ENCODE measurements at regions of chr2 and their contacts with region 1.

Region 1: DNA sequence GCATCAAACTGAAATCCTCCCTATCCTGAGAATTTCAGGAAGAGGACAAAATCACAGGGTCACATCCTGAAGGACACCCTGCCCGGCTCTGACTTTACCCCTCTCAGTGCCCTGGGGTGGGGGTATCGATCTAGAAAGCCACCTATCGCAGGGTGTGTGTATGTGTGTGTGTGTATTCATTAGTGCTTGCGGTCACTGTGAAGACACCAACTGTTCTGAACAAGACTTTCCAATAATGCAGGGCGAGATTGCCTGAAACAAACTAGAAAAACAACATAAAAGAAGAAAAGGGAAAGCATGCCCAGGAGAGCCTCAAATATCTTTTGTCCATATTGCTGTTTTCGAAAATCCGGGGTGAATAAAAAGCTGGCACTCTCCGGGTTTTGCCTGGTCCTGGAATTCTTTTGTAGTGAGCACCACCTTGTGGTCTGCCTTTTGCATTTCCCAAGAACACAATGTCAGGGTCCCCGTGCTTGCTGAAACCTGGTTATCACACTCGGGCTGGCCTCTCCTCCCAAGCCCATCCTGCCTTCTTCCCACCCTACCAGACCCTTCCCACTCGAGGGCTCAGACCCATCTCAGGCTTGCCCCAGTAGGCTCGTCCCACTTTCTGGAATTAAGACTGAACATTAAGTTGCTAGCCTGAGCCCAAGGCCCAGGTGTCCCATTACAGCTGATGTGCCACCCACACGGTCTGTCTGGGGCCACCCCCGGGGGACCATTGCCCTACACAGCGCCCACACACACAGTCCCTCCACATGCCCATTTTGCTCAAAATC is 25.0 kb upstream of the COPS8 start:
- DNase-seq: peak; percentile 62
- ATAC-seq: peak; percentile 90
- H3K4me3 ChIP-seq: no peak overlapping the region
- H3K27ac ChIP-seq: no peak overlapping the region
- H3K4me1 ChIP-seq: peaks cover 7% of the 10 kb centered on the region; the same call in 1 of the 2 replicates
- H3K27me3 ChIP-seq: no peaks in the 10 kb centered on the region
- CTCF ChIP-seq: peak; percentile 85
- EP300 ChIP-seq: no peak
- POLR2A ChIP-seq: no peak
- RAD21 ChIP-seq: peak; percentile 77

Region 2: DNA sequence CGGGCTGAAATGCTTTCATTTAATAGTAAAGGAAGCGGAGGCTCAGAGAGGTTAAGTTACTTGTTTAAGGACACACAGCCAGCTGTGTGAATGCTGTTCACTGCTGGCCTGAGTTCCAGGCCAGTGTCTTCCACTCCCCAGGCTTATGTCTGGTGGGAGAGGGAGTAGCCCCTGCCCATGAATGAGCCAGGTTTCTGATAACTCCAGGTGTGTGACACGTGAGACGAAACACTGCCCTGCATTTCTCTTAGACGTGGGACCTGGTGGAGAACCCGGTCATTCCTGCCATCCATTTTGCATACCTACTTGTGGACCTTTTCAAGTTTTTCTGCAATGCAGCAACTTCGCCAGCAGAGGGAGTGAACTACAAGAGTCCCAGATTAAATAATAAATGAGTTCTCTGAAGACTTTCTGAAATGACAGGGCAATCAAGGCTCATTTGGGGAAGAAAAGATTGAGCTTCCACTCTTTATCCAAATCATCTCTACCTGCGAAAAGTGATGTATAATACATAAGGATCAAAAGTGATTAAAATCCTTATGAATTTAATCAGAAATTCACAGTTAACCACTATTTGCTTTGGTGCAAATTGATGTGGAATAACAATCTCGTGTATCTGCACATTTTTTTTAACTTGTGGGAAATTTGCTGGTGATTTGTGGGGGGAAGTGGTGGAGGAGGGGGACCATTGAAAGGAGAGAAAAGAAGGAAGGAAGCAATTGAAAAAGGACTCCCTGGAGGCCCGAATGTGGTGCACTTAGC is 717.1 kb before region 1 on chr2:
- CTCF ChIA-PET with region 1: interaction called, 13 read pairs
- POLR2A ChIA-PET with region 1: no interaction called
- in situ Hi-C with region 1: no loop called
- intact Hi-C with region 1: loop called (anchors 2 kb)
- DNase-seq: peak; percentile 70
- ATAC-seq: peak; percentile 61
- H3K4me3 ChIP-seq: no peak overlapping the region
- H3K27ac ChIP-seq: no peak overlapping the region
- H3K4me1 ChIP-seq: no peaks in the 10 kb centered on the region
- H3K27me3 ChIP-seq: peaks cover 3 to 45% of the 10 kb centered on the region in 2 experiments; a peak in 4 of 5 replicates
- CTCF ChIP-seq: peak; percentile 71
- EP300 ChIP-seq: no peak
- POLR2A ChIP-seq: no peak
- RAD21 ChIP-seq: peak; percentile 39; the same call in 1 of the 2 replicates

Region 3: DNA sequence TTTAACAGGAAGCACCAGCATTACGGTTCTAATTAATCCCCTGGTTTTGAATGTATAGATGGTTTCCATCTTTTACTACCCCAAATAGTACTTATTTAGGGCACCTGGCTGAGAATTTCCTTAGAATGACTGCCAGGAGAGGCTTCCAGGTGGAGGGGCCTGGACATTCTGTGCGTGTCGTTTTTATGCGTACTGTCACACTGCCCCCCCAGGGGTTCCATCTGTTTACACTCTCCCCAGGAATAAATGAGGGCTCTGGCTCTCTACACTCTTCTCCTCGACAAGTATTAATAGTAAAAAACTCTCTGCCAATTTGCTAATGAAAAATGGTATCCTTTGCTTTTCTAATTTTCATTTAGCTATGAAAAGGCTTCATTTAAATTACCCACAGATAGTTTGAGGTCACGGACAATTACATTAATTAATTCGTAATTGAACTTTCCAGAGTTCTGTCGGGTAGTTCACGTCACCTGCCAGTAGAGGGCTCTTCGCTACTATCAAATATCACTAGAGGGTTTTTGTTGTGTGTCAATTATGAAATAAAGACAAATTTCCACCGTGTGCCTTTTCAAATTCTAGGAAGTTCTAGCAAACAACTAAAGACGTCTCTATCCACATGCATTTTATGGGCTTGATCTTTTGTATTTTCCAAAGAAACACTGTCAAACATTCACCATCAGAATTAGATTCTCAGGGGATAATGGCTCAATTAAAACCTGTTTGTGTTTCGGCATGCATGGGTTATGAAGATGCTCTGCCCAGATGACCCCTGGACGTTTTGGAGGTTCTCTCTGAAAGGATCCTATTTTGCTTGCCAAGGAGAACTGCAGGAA is 707.7 kb before region 1 on chr2:
- CTCF ChIA-PET with region 1: interaction called, 19 read pairs
- POLR2A ChIA-PET with region 1: no interaction called
- in situ Hi-C with region 1: no loop called
- intact Hi-C with region 1: loop called (anchors 1 kb)
- DNase-seq: no peak
- ATAC-seq: no peak
- H3K4me3 ChIP-seq: no peak overlapping the region
- H3K27ac ChIP-seq: no peak overlapping the region
- H3K4me1 ChIP-seq: no peaks in the 10 kb centered on the region
- H3K27me3 ChIP-seq: peaks cover 0 to 43% of the 10 kb centered on the region in 2 experiments; a peak in 4 of 5 replicates
- CTCF ChIP-seq: peak; percentile 72
- EP300 ChIP-seq: no peak
- POLR2A ChIP-seq: no peak
- RAD21 ChIP-seq: peak; percentile 55; the same call in 1 of the 2 replicates